ENCODE measurements at regions of chr15 and their contacts with region 1.

Region 1: DNA sequence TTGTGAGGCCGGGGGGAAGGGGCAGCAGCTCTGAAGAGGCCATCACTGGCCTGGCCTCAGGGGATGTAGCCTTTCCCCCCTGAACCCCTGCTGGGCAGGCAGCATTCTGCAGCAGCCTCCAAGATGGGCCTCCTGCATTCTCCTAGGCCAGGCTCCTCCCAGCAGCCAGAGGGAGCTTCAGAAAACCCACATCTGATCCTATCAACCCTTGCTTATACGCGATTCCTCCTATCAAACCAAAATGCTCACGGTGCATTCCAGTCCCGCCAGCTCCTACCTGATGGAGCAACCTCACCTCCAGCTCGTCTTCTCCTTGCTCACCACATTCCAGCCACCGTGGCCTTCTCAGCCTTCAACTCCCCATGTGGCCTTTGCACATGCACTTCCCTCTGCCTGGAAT is 85.7 kb downstream of the MEGF11 start:
- DNase-seq: no peak
- ATAC-seq: no peak
- H3K4me3 Mint-ChIP-seq: no peak overlapping the region
- H3K27ac Mint-ChIP-seq: no peak overlapping the region
- H3K4me1 Mint-ChIP-seq: no peaks in the 10 kb centered on the region
- H3K27me3 Mint-ChIP-seq: peaks cover 5% of the 10 kb centered on the region

Region 2: DNA sequence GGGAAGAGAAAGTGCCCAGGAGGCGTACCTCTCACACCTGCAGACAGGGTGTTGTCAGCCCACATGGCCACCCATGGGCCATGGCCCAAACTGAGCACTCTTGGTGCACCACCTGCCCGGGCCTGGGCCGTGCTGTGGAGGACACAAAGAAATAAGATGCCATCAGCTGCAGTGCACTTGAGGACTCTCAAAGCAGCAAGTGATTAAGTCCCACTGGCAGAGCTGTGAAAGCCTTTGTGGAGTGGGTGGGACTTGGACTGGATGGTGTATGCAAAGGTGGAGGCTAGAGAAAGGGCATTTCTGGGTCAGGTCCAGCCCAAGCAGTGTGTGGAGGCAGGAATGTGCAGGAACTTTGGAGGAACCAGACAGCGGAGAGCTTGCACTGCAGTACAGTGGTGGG is 36.7 kb before region 1 on chr15:
- CTCF ChIA-PET with region 1: no interaction called
- POLR2A ChIA-PET with region 1: no interaction called
- intact Hi-C with region 1: loop called in 1 of 2 experiments (anchors 1 kb)
- DNase-seq: no peak
- ATAC-seq: no peak
- H3K4me3 Mint-ChIP-seq: no peak overlapping the region
- H3K27ac Mint-ChIP-seq: no peak overlapping the region
- H3K4me1 Mint-ChIP-seq: peaks cover 5% of the 10 kb centered on the region
- H3K27me3 Mint-ChIP-seq: peaks cover 8% of the 10 kb centered on the region

Region 3: GRCh38 chr15:66417736-66418135 is 249.9 kb after region 1 on chr15:
- CTCF ChIA-PET with region 1: no interaction called
- POLR2A ChIA-PET with region 1: no interaction called
- intact Hi-C with region 1: no loop called
- DNase-seq: no peak
- ATAC-seq: no peak
- H3K4me3 Mint-ChIP-seq: no peak overlapping the region
- H3K27ac Mint-ChIP-seq: no peak overlapping the region
- H3K4me1 Mint-ChIP-seq: peaks cover 59% of the 10 kb centered on the region
- H3K27me3 Mint-ChIP-seq: no peaks in the 10 kb centered on the region

Region 4: GRCh38 chr15:66504563-66505429 is 336.9 kb after region 1 on chr15 and contains the starts of genes RPL4 and ZWILCH:
- CTCF ChIA-PET with region 1: no interaction called
- POLR2A ChIA-PET with region 1: no interaction called
- intact Hi-C with region 1: no loop called
- DNase-seq: peak; percentile 85
- ATAC-seq: peak; percentile 89
- H3K4me3 Mint-ChIP-seq: peak within 1 kb of the TSS; percentile 88
- H3K27ac Mint-ChIP-seq: peak within 1 kb of the TSS; percentile 98
- H3K4me1 Mint-ChIP-seq: peaks cover 56% of the 10 kb centered on the region
- H3K27me3 Mint-ChIP-seq: no peaks in the 10 kb centered on the region
- total RNA-seq, gene RPL4: 4,227 to 4,959 TPM
- total RNA-seq, gene ZWILCH: 27.4 to 31.1 TPM

Measured in activated CD4-positive, alpha-beta T cell treated with anti-CD3 and anti-CD28 coated beads for 36 hours (primary cell).